Gastrocnemius medialis (tissue), 4 donors: ENCODE measurements at regions of chr5 and their contacts with region 1.

Region 1: GRCh38 chr5:90529194-90529938 is at the start of gene LYSMD3:
- DNase-seq: peak; percentile 97
- ATAC-seq: peak; percentile 91 to 92
- H3K4me3 ChIP-seq: peak within 1 kb of the TSS; percentile 68 to 98 (median 94)
- H3K27ac ChIP-seq: peak within 1 kb of the TSS; percentile 92 to 96 (median 95)
- H3K4me1 ChIP-seq: peaks cover 24 to 26% of the 10 kb centered on the region in 2 donors
- H3K27me3 ChIP-seq: peaks cover 0 to 5% (median 0%) of the 10 kb centered on the region in 3 donors
- CTCF ChIP-seq: no peak
- POLR2A ChIP-seq: peak; percentile 81 to 90
- total RNA-seq, gene LYSMD3: 7.9 to 15.7 (median 14.3) TPM

Region 2: GRCh38 chr5:90409318-90410177 is 119.8 kb before region 1 on chr5 and contains the start of gene CETN3:
- in situ Hi-C with region 1: loop called in 2 of 4 experiments (anchors 10 to 25 kb)
- intact Hi-C with region 1: loop called (anchors 1 kb)
- DNase-seq: peak; percentile 92 to 93
- ATAC-seq: peak; percentile 99
- H3K4me3 ChIP-seq: peak within 1 kb of the TSS; percentile 76 to 97 (median 86)
- H3K27ac ChIP-seq: peak within 1 kb of the TSS; percentile 92 to 97 (median 94)
- H3K4me1 ChIP-seq: peaks cover 12 to 14% of the 10 kb centered on the region in 2 donors
- H3K27me3 ChIP-seq: no peaks in the 10 kb centered on the region
- CTCF ChIP-seq: peak in 1 of 5 experiments; percentile 12
- POLR2A ChIP-seq: peak; percentile 62 to 89
- total RNA-seq, gene CETN3: 1.4 to 4.9 (median 3.2) TPM

Region 3: DNA sequence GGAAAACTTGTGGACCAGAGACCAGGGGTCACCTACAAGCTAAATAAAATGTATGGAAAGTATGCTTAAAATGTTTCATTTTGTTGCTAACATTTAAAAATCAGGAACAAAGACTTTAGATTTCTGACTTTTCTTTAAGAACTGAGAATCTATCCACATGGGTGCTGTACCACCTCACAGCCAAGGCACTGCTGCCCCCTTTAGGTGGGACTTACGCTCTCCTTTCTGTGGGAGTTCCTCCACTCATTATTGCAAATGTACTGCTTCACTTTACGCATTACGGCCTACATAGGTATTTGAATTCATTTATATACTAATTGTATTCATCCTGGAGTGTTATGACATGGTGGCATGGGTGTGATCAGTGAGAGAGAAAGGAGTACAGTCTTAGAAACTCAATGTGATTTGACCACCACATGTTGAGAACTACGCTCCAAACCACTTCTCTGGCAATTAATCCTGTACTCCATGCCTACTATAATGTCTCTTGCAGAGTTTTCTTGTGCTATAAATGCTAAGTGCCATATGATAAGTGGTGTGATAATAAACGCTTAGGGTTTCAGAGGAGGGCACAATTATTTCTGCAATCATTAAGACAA is 95.2 kb before region 1 on chr5:
- in situ Hi-C with region 1: loop called in 1 of 4 experiments (anchors 5 kb)
- intact Hi-C with region 1: loop called (anchors 1 kb)
- DNase-seq: no peak
- ATAC-seq: no peak
- H3K4me3 ChIP-seq: no peak overlapping the region
- H3K27ac ChIP-seq: no peak overlapping the region
- H3K4me1 ChIP-seq: no peaks in the 10 kb centered on the region
- H3K27me3 ChIP-seq: no peaks in the 10 kb centered on the region
- CTCF ChIP-seq: peak in 3 of 5 experiments; percentile 16 to 56 (median 40)
- POLR2A ChIP-seq: no peak

Region 4: GRCh38 chr5:90446961-90447360 is 82.4 kb before region 1 on chr5:
- in situ Hi-C with region 1: loop called in 1 of 4 experiments (anchors 10 kb)
- intact Hi-C with region 1: no loop called
- DNase-seq: no peak
- ATAC-seq: no peak
- H3K4me3 ChIP-seq: no peak overlapping the region
- H3K27ac ChIP-seq: no peak overlapping the region
- H3K4me1 ChIP-seq: no peaks in the 10 kb centered on the region
- H3K27me3 ChIP-seq: no peaks in the 10 kb centered on the region
- CTCF ChIP-seq: no peak
- POLR2A ChIP-seq: no peak

Region 5: GRCh38 chr5:90474235-90475109 is 54.9 kb before region 1 on chr5 and contains the starts of genes MBLAC2 and POLR3G:
- in situ Hi-C with region 1: loop called in 1 of 4 experiments (anchors 10 kb)
- intact Hi-C with region 1: loop called (anchors 1 kb)
- DNase-seq: peak; percentile 90 to 91
- ATAC-seq: peak; percentile 92 to 97
- H3K4me3 ChIP-seq: peak within 1 kb of the TSS; percentile 76 to 90 (median 82)
- H3K27ac ChIP-seq: peak within 1 kb of the TSS; percentile 82 to 91 (median 84)
- H3K4me1 ChIP-seq: peaks cover 11 to 26% of the 10 kb centered on the region in 2 donors
- H3K27me3 ChIP-seq: no peaks in the 10 kb centered on the region
- CTCF ChIP-seq: peak; percentile 44 to 67 (median 62)
- POLR2A ChIP-seq: peak; percentile 77 to 79
- total RNA-seq, gene MBLAC2: 1.1 to 2.4 (median 1.7) TPM
- total RNA-seq, gene POLR3G: 0.89 to 5.8 (median 3.7) TPM